ENCODE measurements at regions of chr17 and their contacts with region 1.

Region 1: DNA sequence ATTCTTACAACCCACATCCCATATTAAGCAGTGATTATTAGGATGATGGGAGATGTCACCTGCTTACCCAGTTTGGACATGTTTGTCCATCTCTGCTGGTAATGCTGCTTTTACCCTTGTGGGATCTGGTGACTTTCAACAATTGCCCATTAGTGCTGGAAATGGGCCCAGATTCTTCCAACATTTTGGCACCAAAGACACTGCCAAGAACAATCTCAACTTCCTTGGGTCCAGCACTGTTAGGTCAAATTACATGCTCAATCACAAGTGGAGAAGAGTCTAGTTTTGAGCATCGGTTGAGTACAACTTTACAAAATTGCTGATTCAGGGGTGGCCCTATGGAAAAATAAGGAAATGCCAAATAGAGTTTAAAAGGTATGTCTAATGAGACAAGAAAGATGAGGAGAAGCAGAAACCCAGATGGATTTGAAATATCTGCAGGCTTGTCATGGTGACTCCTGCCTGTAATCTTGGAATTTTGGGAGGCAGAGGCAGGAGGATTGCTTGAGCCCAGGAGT is 13.0 kb upstream of the ZFP3 start:
- DNase-seq: no peak
- ATAC-seq: no peak
- H3K4me3 ChIP-seq: no peak overlapping the region
- H3K27ac ChIP-seq: no peak overlapping the region
- H3K4me1 ChIP-seq: no peaks in the 10 kb centered on the region
- H3K27me3 ChIP-seq: no peaks in the 10 kb centered on the region
- CTCF ChIP-seq: no peak
- POLR2A ChIP-seq: no peak
- RAD21 ChIP-seq: no peak

Region 2: DNA sequence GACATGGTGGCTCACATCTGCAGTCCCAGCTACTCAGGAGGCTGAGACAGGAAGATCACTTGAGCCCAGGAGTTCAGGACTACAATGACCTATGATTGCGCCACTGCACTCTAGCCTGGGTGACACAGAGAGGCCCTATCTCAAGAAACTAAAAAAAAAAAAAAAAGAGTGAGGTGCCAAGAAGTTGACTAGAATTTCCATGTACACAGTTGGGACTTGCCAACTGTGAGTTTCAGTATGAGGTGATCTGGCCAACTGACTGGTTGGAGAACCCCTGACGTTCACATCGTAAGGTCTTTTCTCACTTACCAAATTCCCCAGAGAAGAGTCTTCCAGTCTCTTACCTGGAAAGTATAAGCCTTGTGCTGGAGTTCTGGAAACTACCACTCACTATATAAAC is 337.2 kb before region 1 on chr17:
- CTCF ChIA-PET with region 1: no interaction called
- POLR2A ChIA-PET with region 1: no interaction called
- RAD21 ChIA-PET with region 1: no interaction called
- intact Hi-C with region 1: no loop called
- DNase-seq: no peak
- ATAC-seq: no peak
- H3K4me3 ChIP-seq: no peak overlapping the region
- H3K27ac ChIP-seq: no peak overlapping the region
- H3K4me1 ChIP-seq: peaks cover 3 to 15% of the 10 kb centered on the region in 2 experiments; a peak in 3 of 4 replicates
- H3K27me3 ChIP-seq: no peaks in the 10 kb centered on the region
- CTCF ChIP-seq: no peak
- POLR2A ChIP-seq: no peak
- RAD21 ChIP-seq: no peak

Region 3: GRCh38 chr17:4908301-4908700 is 157.0 kb before region 1 on chr17:
- CTCF ChIA-PET with region 1: interaction called, 13 read pairs
- POLR2A ChIA-PET with region 1: no interaction called
- RAD21 ChIA-PET with region 1: interaction called, 3 to 9 read pairs
- intact Hi-C with region 1: loop called (anchors 1 kb)
- DNase-seq: no peak
- ATAC-seq: no peak
- H3K4me3 ChIP-seq: no peak overlapping the region
- H3K27ac ChIP-seq: no peak overlapping the region
- H3K4me1 ChIP-seq: peaks cover 7 to 22% of the 10 kb centered on the region in 2 experiments
- H3K27me3 ChIP-seq: no peaks in the 10 kb centered on the region
- CTCF ChIP-seq: no peak
- POLR2A ChIP-seq: no peak
- RAD21 ChIP-seq: no peak

Region 4: DNA sequence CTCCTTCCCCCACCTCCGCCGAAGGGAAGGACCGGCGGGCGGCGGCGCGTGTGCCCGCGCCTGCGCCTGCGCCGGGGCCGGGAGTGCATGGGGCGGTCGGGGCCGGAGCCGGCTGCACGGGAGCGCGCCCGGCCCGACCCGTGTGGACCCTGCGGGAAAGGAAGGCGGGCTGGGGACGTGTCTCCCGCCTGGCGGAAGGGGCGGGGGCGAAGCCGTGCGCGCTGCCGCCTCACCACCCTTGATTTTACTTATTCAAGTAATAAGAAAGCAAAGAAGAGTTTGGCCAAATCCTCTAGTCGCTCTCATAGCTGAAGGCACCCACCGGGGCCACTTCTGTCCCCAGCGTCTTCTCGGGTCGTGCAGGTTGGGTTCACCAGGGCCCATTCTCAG is 116.4 kb before region 1 on chr17:
- CTCF ChIA-PET with region 1: no interaction called
- POLR2A ChIA-PET with region 1: no interaction called
- RAD21 ChIA-PET with region 1: no interaction called
- intact Hi-C with region 1: loop called (anchors 1 kb)
- DNase-seq: peak; percentile 64
- ATAC-seq: peak; percentile 63
- H3K4me3 ChIP-seq: peak overlapping the region; percentile 96 to 97
- H3K27ac ChIP-seq: peak overlapping the region; percentile 99
- H3K4me1 ChIP-seq: peaks cover 35 to 70% of the 10 kb centered on the region in 2 experiments
- H3K27me3 ChIP-seq: no peaks in the 10 kb centered on the region
- CTCF ChIP-seq: no peak
- POLR2A ChIP-seq: peak; percentile 66
- RAD21 ChIP-seq: no peak

Region 5: DNA sequence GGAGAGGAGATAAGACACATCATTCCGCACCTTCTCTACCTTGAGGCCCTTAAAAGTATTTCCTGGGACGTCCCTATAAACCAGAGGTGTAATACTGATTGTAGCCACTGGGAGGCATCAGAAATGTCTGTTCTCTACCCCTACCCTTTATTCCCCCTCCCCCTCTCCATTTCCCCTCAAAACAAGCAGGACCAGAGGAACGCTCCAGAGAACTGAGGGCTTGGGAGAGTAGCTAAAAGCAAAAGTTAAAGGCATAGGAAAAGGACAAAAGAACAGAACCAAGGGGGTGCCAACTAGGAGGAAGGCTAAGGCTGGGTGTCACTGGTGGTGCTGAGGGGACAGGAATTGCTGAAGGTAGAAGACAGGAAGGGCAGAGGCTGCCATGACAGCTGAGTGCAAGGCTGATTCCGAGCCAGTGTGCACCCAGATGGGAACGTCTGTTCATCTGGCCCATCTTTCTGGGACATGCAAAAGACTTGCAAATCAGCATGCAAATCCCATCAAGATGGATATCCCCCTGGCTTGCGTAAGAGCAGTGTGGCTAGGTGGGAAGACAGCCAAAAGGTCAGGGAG is 84.6 kb before region 1 on chr17:
- CTCF ChIA-PET with region 1: interaction called, 3 read pairs
- POLR2A ChIA-PET with region 1: no interaction called
- RAD21 ChIA-PET with region 1: interaction called in 1 of 2 experiments, 3 read pairs
- intact Hi-C with region 1: loop called (anchors 1 kb)
- DNase-seq: no peak
- ATAC-seq: peak; percentile 84
- H3K4me3 ChIP-seq: no peak overlapping the region
- H3K27ac ChIP-seq: no peak overlapping the region
- H3K4me1 ChIP-seq: peaks cover under 1 to 2% of the 10 kb centered on the region in 2 experiments; a peak in 1 of 4 replicates
- H3K27me3 ChIP-seq: no peaks in the 10 kb centered on the region
- CTCF ChIP-seq: peak; percentile 58 to 73 (median 65); a peak in 5 of 6 replicates
- POLR2A ChIP-seq: no peak
- RAD21 ChIP-seq: peak; percentile 51

Region 6: DNA sequence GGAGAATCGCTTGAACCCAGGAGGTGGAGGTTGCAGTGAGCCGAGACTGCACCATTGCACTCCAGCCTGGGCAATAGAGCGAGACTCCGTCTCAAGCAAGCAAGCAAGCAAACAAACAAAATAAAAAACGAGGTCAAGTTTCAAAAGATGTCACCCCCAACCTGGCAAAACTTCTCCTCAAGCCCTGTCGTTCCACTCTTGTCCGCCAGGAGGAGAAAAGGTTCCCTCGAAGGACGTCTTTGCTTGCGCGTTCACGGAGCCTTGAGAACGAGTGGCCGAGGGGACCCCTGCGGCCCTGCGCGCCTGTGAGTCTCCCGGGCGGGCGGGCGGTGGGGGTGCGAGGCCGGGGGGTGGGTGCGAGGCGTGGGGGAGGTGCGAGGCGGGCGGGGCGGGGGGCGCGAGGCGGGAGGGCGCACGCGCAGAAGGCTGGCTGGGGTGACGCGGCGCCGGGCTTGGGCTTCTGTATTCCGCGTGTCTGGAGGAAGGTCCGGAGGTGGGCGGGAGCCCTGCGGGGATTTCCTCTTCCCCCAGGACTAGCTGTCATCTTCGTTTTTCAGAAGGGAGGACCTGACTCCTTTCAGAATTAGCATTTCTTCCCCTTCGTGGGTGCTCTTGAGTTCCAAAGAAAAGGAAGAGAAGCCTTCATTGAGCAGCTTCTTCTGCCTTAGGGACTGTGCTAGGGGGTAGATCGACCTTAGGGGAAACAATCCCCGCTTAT is 33.8 kb before region 1 on chr17:
- CTCF ChIA-PET with region 1: interaction called, 3 read pairs
- POLR2A ChIA-PET with region 1: no interaction called
- RAD21 ChIA-PET with region 1: no interaction called
- intact Hi-C with region 1: loop called (anchors 1 kb)
- DNase-seq: peak; percentile 62
- ATAC-seq: peak; percentile 84
- H3K4me3 ChIP-seq: peak overlapping the region; percentile 30 to 44
- H3K27ac ChIP-seq: no peak overlapping the region
- H3K4me1 ChIP-seq: peaks cover 3 to 11% of the 10 kb centered on the region in 2 experiments; a peak in 3 of 4 replicates
- H3K27me3 ChIP-seq: no peaks in the 10 kb centered on the region
- CTCF ChIP-seq: peak; percentile 55 to 79 (median 55)
- POLR2A ChIP-seq: no peak
- RAD21 ChIP-seq: peak; percentile 49; the same call in 1 of the 2 replicates